ENCODE measurements at regions of chr9 and their contacts with region 1.

Region 1: GRCh38 chr9:129884220-129885017 is 49.2 kb downstream of the USP20 start:
- DNase-seq: peak; percentile 89 to 98
- H3K4me3 ChIP-seq: no peak overlapping the region
- CTCF ChIP-seq: no peak
- POLR2A ChIP-seq: no peak

Region 2: GRCh38 chr9:129835021-129835871 is 49.2 kb before region 1 on chr9 and contains the starts of genes C9orf78 and USP20:
- intact Hi-C with region 1: no loop called
- DNase-seq: peak; percentile 92 to 98
- H3K4me3 ChIP-seq: peak within 1 kb of the TSS; percentile 85
- CTCF ChIP-seq: no peak
- POLR2A ChIP-seq: peak in 1 of 2 donors; percentile 91
- total RNA-seq, gene C9orf78: 56.3 to 105 (median 61.3) TPM
- total RNA-seq, gene USP20: 20.7 to 39.7 (median 36.1) TPM

Region 3: GRCh38 chr9:130053504-130054324 is 169.3 kb after region 1 on chr9 and contains the start of gene GPR107:
- intact Hi-C with region 1: loop called (anchors 10 kb)
- DNase-seq: peak; percentile 59 to 95
- H3K4me3 ChIP-seq: peak within 1 kb of the TSS; percentile 100
- CTCF ChIP-seq: no peak
- POLR2A ChIP-seq: peak in 1 of 2 donors; percentile 11
- total RNA-seq, gene GPR107: 28.1 to 34.5 (median 32.9) TPM

Region 4: GRCh38 chr9:130117816-130118632 is 233.6 kb after region 1 on chr9:
- intact Hi-C with region 1: no loop called
- DNase-seq: no peak
- H3K4me3 ChIP-seq: no peak overlapping the region
- CTCF ChIP-seq: no peak
- POLR2A ChIP-seq: no peak